ENCODE measurements at regions of chr18 and their contacts with region 1.

Region 1: GRCh38 chr18:57630002-57630753 is 8.5 kb upstream of the NARS1 start:
- DNase-seq: peak; percentile 97
- ATAC-seq: peak; percentile 98
- H3K4me3 Mint-ChIP-seq: peak overlapping the region; percentile 97
- H3K27ac Mint-ChIP-seq: peak overlapping the region; percentile 97
- H3K4me1 Mint-ChIP-seq: peaks cover 17% of the 10 kb centered on the region
- H3K27me3 Mint-ChIP-seq: no peaks in the 10 kb centered on the region
- CTCF ChIP-seq: peak; percentile 60

Region 2: GRCh38 chr18:57561728-57562423 is 68.3 kb before region 1 on chr18:
- CTCF ChIA-PET with region 1: no interaction called
- POLR2A ChIA-PET with region 1: no interaction called
- intact Hi-C with region 1: no loop called
- DNase-seq: peak; percentile 15
- ATAC-seq: peak; percentile 66
- H3K4me3 Mint-ChIP-seq: no peak overlapping the region
- H3K27ac Mint-ChIP-seq: no peak overlapping the region
- H3K4me1 Mint-ChIP-seq: peaks cover 2% of the 10 kb centered on the region
- H3K27me3 Mint-ChIP-seq: no peaks in the 10 kb centered on the region
- CTCF ChIP-seq: peak; percentile 94

Region 3: GRCh38 chr18:57687970-57688369 is 57.8 kb after region 1 on chr18:
- CTCF ChIA-PET with region 1: no interaction called
- POLR2A ChIA-PET with region 1: no interaction called
- intact Hi-C with region 1: no loop called
- DNase-seq: no peak
- ATAC-seq: no peak
- H3K4me3 Mint-ChIP-seq: no peak overlapping the region
- H3K27ac Mint-ChIP-seq: no peak overlapping the region
- H3K4me1 Mint-ChIP-seq: peaks cover 7% of the 10 kb centered on the region
- H3K27me3 Mint-ChIP-seq: no peaks in the 10 kb centered on the region
- CTCF ChIP-seq: no peak

Region 4: GRCh38 chr18:57841568-57841967 is 211.4 kb after region 1 on chr18:
- CTCF ChIA-PET with region 1: interaction called, 3 read pairs
- POLR2A ChIA-PET with region 1: interaction called, 3 read pairs
- intact Hi-C with region 1: loop called (anchors 5 kb)
- DNase-seq: peak; percentile 60
- ATAC-seq: peak; percentile 67
- H3K4me3 Mint-ChIP-seq: no peak overlapping the region
- H3K27ac Mint-ChIP-seq: peak overlapping the region; percentile 64
- H3K4me1 Mint-ChIP-seq: peaks cover 43% of the 10 kb centered on the region
- H3K27me3 Mint-ChIP-seq: peaks cover 30% of the 10 kb centered on the region
- CTCF ChIP-seq: no peak